Endothelial cell of umbilical vein (primary cell): ENCODE measurements at regions of chr17 and their contacts with region 1.

Region 1: DNA sequence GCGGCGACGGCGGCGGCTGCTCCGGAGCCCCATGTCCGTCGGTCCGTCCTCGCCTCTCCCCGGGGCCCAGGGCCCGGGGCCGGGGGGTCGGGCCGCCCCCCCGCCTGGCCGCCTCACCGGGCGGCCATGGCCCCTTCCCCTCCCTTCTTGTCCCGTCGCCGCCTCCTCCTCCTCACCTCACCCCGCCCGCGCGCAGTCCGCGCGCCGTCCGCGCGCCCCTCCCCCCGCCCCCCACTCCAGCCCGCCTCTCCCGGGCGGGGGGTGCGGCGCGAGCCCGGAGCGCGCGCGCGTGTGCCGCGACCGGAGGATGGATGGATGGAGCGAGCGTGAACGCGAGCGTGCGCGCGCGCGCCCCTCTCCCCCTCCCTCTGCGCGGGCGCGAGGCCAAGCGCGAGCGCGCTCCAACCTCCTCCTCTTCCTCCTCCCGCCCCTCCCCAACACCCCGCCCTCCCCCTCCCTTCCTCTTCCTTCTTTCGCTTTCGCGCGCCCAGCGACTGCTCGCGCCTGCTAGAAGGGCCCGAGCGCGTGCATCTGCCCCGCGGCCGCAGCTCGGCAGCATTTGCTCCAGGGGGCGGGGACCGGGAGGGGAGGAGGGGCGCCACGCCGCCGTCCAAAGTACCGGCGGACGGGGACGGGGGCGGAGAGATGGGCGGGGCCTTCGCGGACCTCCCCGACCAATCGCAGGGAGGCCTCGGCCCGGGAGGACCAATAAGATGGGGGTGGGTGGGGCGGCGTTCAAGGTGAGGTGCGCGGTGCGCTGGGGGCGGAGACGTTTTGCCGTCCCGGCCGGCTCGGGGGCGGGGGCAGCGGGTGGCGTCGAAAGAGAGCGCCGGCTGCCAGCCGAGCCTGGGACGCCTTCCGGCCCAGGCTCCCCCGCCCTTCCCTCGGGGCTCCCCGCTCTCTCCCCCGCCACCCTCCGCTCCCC is at the start of gene ATXN7L3:
- DNase-seq: peak; percentile 98
- H3K4me3 ChIP-seq: peak within 1 kb of the TSS; percentile 70 to 94 (median 88)
- H3K27ac ChIP-seq: peak within 1 kb of the TSS; percentile 69
- H3K4me1 ChIP-seq: peaks cover 26% of the 10 kb centered on the region
- H3K27me3 ChIP-seq: no peaks in the 10 kb centered on the region
- CTCF ChIP-seq: no peak
- POLR2A ChIP-seq: peak; percentile 50
- total RNA-seq, gene ATXN7L3: 82.5 and 102 TPM in 2 replicates

Region 2: DNA sequence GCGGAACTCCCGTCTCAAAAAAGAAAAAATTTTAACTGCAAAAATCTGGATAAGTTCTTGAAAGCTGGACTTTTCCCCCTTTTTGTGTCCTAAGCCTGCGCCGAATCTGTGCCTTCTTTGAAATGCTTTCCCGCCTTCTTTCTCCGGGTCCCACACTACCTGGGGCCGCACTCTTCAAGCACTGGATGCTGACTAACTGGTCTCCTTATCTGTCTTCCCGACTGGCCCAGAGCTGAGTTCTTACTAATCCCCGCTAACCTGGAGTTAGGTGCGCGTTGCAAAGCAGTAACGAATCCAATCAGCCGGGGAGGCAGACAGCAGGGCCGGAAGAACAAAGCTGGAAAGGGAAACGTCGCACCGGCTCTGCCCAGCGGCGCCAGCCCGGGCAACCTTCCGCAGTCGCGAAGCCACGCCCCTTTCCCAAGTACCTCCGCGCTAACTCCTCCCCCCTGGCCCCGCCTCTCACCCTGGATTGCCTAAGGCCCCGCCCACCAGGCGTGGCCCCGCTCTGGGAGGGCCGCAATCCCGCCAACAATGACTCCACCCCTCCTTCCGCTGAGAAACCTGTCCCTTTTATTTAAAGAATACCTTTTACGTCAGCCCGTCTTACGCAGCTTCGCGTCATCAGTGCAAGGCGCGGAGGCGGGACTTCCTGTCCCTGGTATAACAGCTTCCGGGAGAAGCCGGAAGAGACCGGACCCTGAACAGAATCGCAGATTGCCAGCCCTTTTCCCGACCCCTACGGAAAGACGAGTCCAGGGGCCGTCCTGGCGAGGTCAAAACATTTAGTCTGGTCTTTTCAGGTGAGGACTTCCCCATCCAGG is 13.3 kb before region 1 on chr17 and contains the start of gene TMUB2:
- CTCF ChIA-PET with region 1: interaction called, 10 read pairs
- POLR2A ChIA-PET with region 1: interaction called, 3 read pairs
- dilution Hi-C with region 1: no loop called
- intact Hi-C with region 1: loop called (anchors 1 kb)
- DNase-seq: peak; percentile 100
- H3K4me3 ChIP-seq: peak within 1 kb of the TSS; percentile 82 to 96 (median 94)
- H3K27ac ChIP-seq: peak within 1 kb of the TSS; percentile 92
- H3K4me1 ChIP-seq: peaks cover 13% of the 10 kb centered on the region
- H3K27me3 ChIP-seq: no peaks in the 10 kb centered on the region
- CTCF ChIP-seq: no peak
- POLR2A ChIP-seq: peak; percentile 92
- total RNA-seq, gene TMUB2: 39.5 and 43.6 TPM in 2 replicates

Region 3: DNA sequence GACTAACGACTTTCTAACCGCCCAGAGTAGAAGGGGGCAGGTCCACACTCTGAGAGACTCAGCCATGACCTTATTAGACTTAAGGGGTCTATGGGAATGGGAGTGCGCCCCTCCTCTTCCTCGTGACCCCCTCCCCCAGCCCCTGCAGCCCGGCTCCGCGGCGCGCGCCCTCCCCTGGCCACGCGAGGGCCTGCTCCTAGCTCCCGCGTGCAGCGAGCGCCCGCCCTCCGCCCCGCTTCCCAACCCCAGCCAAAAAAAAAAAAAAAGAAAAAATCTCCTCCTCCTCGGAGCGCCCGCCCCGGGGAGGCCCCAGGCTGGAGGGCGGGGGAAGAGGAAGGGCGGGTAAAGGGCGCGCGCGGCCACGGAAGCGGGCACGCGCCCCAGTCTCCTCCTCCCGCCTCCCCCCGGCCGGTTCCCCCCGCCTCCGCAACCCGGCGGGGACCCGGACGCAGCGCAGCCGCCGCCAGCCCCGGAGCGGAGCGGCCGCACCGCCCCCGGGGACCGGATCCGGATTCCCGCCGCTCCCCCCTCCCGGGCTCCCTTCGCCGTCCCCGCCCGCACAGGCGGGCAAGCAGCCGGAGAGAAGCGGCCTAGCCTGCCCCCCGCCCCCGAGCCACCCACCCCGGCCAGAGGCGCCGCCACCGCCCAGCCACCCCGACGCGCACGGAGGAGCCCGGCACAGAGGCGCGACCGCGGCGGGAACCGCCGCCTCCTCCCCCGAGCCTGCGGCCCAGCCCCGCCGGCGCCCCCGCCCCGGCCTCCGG is 18.7 kb after region 1 on chr17:
- CTCF ChIA-PET with region 1: interaction called, 9 read pairs
- POLR2A ChIA-PET with region 1: interaction called, 5 read pairs
- dilution Hi-C with region 1: no loop called
- intact Hi-C with region 1: loop called (anchors 2 kb)
- DNase-seq: peak; percentile 88
- H3K4me3 ChIP-seq: peak overlapping the region; percentile 9 to 68 (median 52)
- H3K27ac ChIP-seq: peak overlapping the region; percentile 71
- H3K4me1 ChIP-seq: peaks cover 34% of the 10 kb centered on the region
- H3K27me3 ChIP-seq: no peaks in the 10 kb centered on the region
- CTCF ChIP-seq: peak; percentile 53 to 72
- POLR2A ChIP-seq: no peak

Region 4: GRCh38 chr17:44331249-44331760 is 131.5 kb after region 1 on chr17:
- CTCF ChIA-PET with region 1: interaction called, 14 read pairs
- POLR2A ChIA-PET with region 1: no interaction called
- dilution Hi-C with region 1: no loop called
- intact Hi-C with region 1: loop called (anchors 1 kb)
- DNase-seq: peak; percentile 80
- H3K4me3 ChIP-seq: no peak overlapping the region
- H3K27ac ChIP-seq: no peak overlapping the region
- H3K4me1 ChIP-seq: no peaks in the 10 kb centered on the region
- H3K27me3 ChIP-seq: no peaks in the 10 kb centered on the region
- CTCF ChIP-seq: peak; percentile 68 to 72
- POLR2A ChIP-seq: no peak

Region 5: GRCh38 chr17:44344939-44345453 is 145.2 kb after region 1 on chr17 and contains the start of gene GRN:
- CTCF ChIA-PET with region 1: interaction called, 17 read pairs
- POLR2A ChIA-PET with region 1: interaction called, 4 read pairs
- dilution Hi-C with region 1: no loop called
- intact Hi-C with region 1: loop called (anchors 1 kb)
- DNase-seq: peak; percentile 99
- H3K4me3 ChIP-seq: peak within 1 kb of the TSS; percentile 31 to 70 (median 62)
- H3K27ac ChIP-seq: peak within 1 kb of the TSS; percentile 4
- H3K4me1 ChIP-seq: no peaks in the 10 kb centered on the region
- H3K27me3 ChIP-seq: peaks cover 0 to 2% of the 10 kb centered on the region in 2 experiments
- CTCF ChIP-seq: no peak
- POLR2A ChIP-seq: peak; percentile 96
- total RNA-seq, gene GRN: 343 and 346 TPM in 2 replicates

Region 6: DNA sequence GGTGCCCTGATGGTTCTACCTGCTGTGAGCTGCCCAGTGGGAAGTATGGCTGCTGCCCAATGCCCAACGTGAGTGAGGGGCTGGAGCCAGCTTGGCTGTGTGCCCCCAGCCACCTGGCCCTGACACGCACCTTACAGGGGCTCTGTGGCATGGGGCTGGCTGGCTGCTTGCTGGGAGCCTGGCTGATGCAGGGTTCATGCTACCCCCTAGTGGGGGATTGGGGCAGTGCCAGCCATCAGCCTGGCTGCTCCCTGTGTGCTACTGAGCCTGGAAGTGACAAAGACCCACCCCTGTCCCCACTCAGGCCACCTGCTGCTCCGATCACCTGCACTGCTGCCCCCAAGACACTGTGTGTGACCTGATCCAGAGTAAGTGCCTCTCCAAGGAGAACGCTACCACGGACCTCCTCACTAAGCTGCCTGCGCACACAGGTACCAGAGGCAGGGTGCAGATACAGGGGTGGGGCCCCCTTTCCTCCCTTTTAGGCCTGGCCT is 151.0 kb after region 1 on chr17:
- CTCF ChIA-PET with region 1: interaction called, 17 read pairs
- POLR2A ChIA-PET with region 1: interaction called, 4 read pairs
- dilution Hi-C with region 1: no loop called
- intact Hi-C with region 1: loop called (anchors 1 kb)
- DNase-seq: peak; percentile 64
- H3K4me3 ChIP-seq: no peak overlapping the region
- H3K27ac ChIP-seq: no peak overlapping the region
- H3K4me1 ChIP-seq: no peaks in the 10 kb centered on the region
- H3K27me3 ChIP-seq: no peaks in the 10 kb centered on the region
- CTCF ChIP-seq: peak; percentile 64 to 95
- POLR2A ChIP-seq: no peak